Caco-2 (cell line): ENCODE measurements at regions of chr2 and their contacts with region 1.

Region 1: DNA sequence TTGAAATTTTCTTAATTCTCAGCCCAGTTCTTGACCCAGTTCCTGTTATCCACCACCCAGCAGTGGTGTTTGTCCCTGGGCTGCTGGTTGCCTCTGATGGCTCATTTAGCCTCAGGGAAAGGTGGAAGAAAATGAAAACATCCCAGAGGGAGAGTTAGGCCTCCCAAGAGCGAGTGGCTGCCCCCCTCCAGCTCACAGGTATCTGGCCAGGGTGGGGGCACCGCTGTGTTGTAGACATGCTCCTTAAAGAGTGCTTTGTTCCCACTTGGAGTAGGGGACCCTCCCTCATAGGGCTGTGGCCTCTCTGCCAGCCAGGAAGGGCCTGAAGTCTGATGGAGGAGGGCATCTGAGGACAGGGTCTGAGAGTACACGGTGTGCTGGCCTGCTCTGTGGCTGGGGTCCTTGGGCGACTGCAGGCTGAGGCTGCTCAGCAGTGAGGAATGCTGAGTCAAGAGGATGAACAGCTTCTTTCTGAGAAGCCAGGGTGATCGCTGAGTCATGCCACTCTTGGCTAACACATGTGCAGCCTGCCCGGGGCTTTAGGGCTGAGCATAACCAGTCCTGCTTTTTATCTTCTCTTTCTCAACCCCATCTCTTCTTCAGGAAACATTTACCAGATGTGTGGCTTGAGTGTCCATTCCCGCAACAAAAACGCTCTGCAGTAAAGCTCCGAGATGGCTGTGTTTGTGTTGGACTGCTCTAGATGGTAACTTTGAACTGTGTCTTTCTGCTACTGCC is 72.3 kb downstream of the IL1R2 start:
- DNase-seq: peak; percentile 73 to 86
- H3K4me3 ChIP-seq: no peak overlapping the region
- H3K4me3 Mint-ChIP-seq: no peak overlapping the region
- H3K27ac Mint-ChIP-seq: peak overlapping the region; percentile 69
- H3K4me1 ChIP-seq: peaks cover 33% of the 10 kb centered on the region
- H3K4me1 Mint-ChIP-seq: peaks cover 36% of the 10 kb centered on the region
- H3K27me3 ChIP-seq: no peaks in the 10 kb centered on the region
- H3K27me3 Mint-ChIP-seq: no peaks in the 10 kb centered on the region
- CTCF ChIP-seq: no peak

Region 2: DNA sequence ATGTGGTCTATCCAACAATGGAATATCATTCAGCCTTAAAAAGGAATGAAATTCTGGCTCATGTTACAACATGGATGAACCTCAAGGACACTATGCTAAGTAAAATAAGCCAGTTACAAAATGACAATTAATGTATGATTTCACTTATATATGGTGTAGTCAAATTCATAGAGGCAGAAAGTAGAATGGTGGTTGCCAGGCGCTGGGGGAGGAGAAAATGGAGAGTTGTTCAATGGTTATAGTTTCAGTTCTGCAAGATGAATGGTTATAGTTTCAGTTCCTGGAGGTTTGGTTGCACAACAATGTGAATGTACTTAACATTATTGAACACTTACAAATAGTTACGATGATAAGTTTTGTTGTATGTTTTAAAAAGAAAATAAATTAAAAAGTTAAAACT is 151.6 kb before region 1 on chr2:
- CTCF ChIA-PET with region 1: no interaction called
- POLR2A ChIA-PET with region 1: no interaction called
- intact Hi-C with region 1: no loop called
- DNase-seq: no peak
- H3K4me3 ChIP-seq: no peak overlapping the region
- H3K4me3 Mint-ChIP-seq: no peak overlapping the region
- H3K27ac Mint-ChIP-seq: no peak overlapping the region
- H3K4me1 ChIP-seq: no peaks in the 10 kb centered on the region
- H3K4me1 Mint-ChIP-seq: no peaks in the 10 kb centered on the region
- H3K27me3 ChIP-seq: no peaks in the 10 kb centered on the region
- H3K27me3 Mint-ChIP-seq: no peaks in the 10 kb centered on the region
- CTCF ChIP-seq: no peak

Region 3: DNA sequence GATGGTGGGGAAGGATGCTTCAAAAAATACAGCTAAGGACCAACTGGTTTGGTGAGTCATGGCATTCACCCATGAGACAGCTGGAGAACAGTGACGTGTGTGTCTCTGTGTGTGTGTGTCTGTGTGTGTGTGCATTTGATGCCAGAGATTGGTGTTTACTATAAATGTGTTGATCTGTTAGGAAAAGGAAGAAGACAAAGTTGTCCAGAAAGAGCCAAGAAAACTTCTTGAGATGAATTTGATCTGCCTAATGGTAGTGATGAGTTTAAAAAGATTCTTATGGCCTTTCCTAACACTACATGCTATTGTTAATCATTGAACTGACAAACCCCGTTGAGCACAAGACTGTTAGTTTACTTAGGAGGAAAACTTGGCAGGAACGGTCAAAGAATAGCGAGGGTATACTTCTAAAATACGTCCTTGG is 42.0 kb after region 1 on chr2:
- CTCF ChIA-PET with region 1: no interaction called
- POLR2A ChIA-PET with region 1: no interaction called
- intact Hi-C with region 1: loop called (anchors 2 kb)
- DNase-seq: no peak
- H3K4me3 ChIP-seq: no peak overlapping the region
- H3K4me3 Mint-ChIP-seq: peak overlapping the region; percentile 17
- H3K27ac Mint-ChIP-seq: peak overlapping the region; percentile 31
- H3K4me1 ChIP-seq: peaks cover 44% of the 10 kb centered on the region
- H3K4me1 Mint-ChIP-seq: peaks cover 59% of the 10 kb centered on the region
- H3K27me3 ChIP-seq: no peaks in the 10 kb centered on the region
- H3K27me3 Mint-ChIP-seq: no peaks in the 10 kb centered on the region
- CTCF ChIP-seq: no peak

Region 4: DNA sequence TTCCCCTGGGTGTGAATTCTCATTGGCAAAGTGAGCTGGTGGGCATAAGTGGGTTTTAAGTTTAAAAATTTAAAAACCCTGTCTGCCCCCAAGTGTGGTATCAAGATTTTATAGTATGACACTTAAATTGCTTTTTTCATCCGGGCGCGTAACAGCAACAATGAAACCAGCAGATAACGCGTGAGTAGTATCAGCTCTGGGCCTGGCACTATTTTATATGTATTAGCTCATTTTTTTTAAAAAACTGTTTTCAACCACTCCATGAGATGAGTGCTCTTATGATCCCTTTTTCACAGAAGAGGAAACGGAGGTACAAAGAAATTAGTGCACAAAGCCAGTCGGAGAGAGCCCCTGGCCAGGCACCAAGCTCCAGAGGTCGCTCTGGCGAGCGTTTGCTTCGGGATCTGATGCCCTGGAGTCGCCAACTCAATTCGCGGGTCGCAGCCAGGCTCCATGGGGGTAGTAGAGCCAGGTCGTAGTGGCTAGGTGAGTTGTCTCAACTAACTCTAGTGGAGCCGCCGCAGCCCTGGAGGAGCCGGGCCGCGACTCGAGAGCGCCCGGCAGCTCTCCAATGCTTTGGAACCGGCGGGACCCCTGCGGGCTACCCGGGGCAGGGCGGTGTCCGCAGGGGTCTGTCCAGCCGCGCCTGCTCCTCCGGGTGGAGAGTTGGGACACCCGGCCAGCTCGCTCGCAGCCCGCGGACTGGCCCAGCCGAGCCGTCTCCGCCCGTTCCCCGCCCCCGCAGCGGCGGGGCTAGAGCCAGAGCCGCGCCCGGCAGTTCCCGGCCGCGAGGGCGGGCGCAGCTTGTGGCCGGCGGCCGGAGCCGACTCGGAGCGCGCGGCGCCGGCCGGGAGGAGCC is 78.1 kb after region 1 on chr2 and contains the start of gene IL1R1:
- CTCF ChIA-PET with region 1: no interaction called
- POLR2A ChIA-PET with region 1: no interaction called
- intact Hi-C with region 1: loop called (anchors 5 kb)
- DNase-seq: peak; percentile 72 to 89
- H3K4me3 ChIP-seq: peak within 1 kb of the TSS; percentile 48
- H3K4me3 Mint-ChIP-seq: peak within 1 kb of the TSS; percentile 90
- H3K27ac Mint-ChIP-seq: peak within 1 kb of the TSS; percentile 95
- H3K4me1 ChIP-seq: no peaks in the 10 kb centered on the region
- H3K4me1 Mint-ChIP-seq: peaks cover 6% of the 10 kb centered on the region
- H3K27me3 ChIP-seq: no peaks in the 10 kb centered on the region
- H3K27me3 Mint-ChIP-seq: no peaks in the 10 kb centered on the region
- CTCF ChIP-seq: peak in 1 of 2 experiments; percentile 24
- total RNA-seq, gene IL1R1: 23.5 and 25.0 TPM in 2 replicates